PC-3 (cell line): ENCODE measurements at regions of chr18 and their contacts with region 1.

Region 1: GRCh38 chr18:2655178-2655953 is at the start of gene SMCHD1:
- DNase-seq: peak; percentile 78
- ATAC-seq: peak; percentile 64
- H3K4me3 ChIP-seq: peak within 1 kb of the TSS; percentile 87
- H3K27ac ChIP-seq: peak within 1 kb of the TSS; percentile 64
- H3K4me1 ChIP-seq: peaks cover 43% of the 10 kb centered on the region
- H3K27me3 ChIP-seq: no peaks in the 10 kb centered on the region
- CTCF ChIP-seq: no peak
- total RNA-seq, gene SMCHD1: 42.0 and 61.0 TPM in 2 replicates

Region 2: GRCh38 chr18:2571200-2572143 is 83.9 kb before region 1 on chr18 and contains the starts of genes METTL4 and NDC80:
- CTCF ChIA-PET with region 1: interaction called, 4 read pairs
- POLR2A ChIA-PET with region 1: interaction called, 7 read pairs
- intact Hi-C with region 1: loop called (anchors 1 kb)
- DNase-seq: peak; percentile 94
- ATAC-seq: peak; percentile 76
- H3K4me3 ChIP-seq: peak within 1 kb of the TSS; percentile 97
- H3K27ac ChIP-seq: peak within 1 kb of the TSS; percentile 90
- H3K4me1 ChIP-seq: peaks cover 15% of the 10 kb centered on the region
- H3K27me3 ChIP-seq: no peaks in the 10 kb centered on the region
- CTCF ChIP-seq: no peak
- total RNA-seq, gene METTL4: 7.5 and 8.6 TPM in 2 replicates
- total RNA-seq, gene NDC80: 26.0 and 53.4 TPM in 2 replicates

Region 3: GRCh38 chr18:2589345-2590068 is 65.9 kb before region 1 on chr18:
- CTCF ChIA-PET with region 1: no interaction called
- POLR2A ChIA-PET with region 1: no interaction called
- intact Hi-C with region 1: loop called (anchors 5 kb)
- DNase-seq: peak; percentile 17
- ATAC-seq: peak; percentile 43
- H3K4me3 ChIP-seq: no peak overlapping the region
- H3K27ac ChIP-seq: no peak overlapping the region
- H3K4me1 ChIP-seq: peaks cover 16% of the 10 kb centered on the region
- H3K27me3 ChIP-seq: no peaks in the 10 kb centered on the region
- CTCF ChIP-seq: no peak

Region 4: GRCh38 chr18:2606335-2606734 is 49.0 kb before region 1 on chr18:
- CTCF ChIA-PET with region 1: no interaction called
- POLR2A ChIA-PET with region 1: interaction called, 7 read pairs
- intact Hi-C with region 1: loop called (anchors 1 kb)
- DNase-seq: no peak
- ATAC-seq: no peak
- H3K4me3 ChIP-seq: no peak overlapping the region
- H3K27ac ChIP-seq: no peak overlapping the region
- H3K4me1 ChIP-seq: peaks cover 15% of the 10 kb centered on the region
- H3K27me3 ChIP-seq: no peaks in the 10 kb centered on the region
- CTCF ChIP-seq: no peak

Region 5: GRCh38 chr18:2618009-2618408 is 37.4 kb before region 1 on chr18:
- CTCF ChIA-PET with region 1: no interaction called
- POLR2A ChIA-PET with region 1: no interaction called
- intact Hi-C with region 1: no loop called
- DNase-seq: no peak
- ATAC-seq: no peak
- H3K4me3 ChIP-seq: no peak overlapping the region
- H3K27ac ChIP-seq: no peak overlapping the region
- H3K4me1 ChIP-seq: no peaks in the 10 kb centered on the region
- H3K27me3 ChIP-seq: no peaks in the 10 kb centered on the region
- CTCF ChIP-seq: no peak

Region 6: GRCh38 chr18:2681993-2682603 is 26.7 kb after region 1 on chr18:
- CTCF ChIA-PET with region 1: no interaction called
- POLR2A ChIA-PET with region 1: interaction called, 5 read pairs
- intact Hi-C with region 1: loop called (anchors 2 kb)
- DNase-seq: no peak
- ATAC-seq: no peak
- H3K4me3 ChIP-seq: no peak overlapping the region
- H3K27ac ChIP-seq: no peak overlapping the region
- H3K4me1 ChIP-seq: no peaks in the 10 kb centered on the region
- H3K27me3 ChIP-seq: no peaks in the 10 kb centered on the region
- CTCF ChIP-seq: no peak

Region 7: DNA sequence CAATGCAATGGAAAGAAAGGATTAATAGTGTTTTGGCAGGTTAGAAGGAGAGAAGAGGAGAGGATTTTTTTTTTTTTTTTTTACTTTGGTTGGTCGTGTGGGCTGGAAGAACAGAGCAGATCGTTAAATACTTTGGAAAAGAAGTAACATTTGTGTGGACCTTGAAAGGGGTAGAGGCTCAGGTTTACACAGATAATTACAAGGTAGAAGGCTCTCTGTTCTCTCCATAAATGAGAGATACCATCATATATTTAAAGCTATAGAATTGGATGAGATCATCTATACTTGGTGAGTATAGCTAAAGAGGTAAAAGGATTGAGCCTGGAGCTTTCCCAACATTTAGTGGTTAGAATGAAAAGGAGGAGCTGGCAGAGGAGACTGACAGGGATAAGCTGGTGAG is 49.2 kb after region 1 on chr18:
- CTCF ChIA-PET with region 1: no interaction called
- POLR2A ChIA-PET with region 1: no interaction called
- intact Hi-C with region 1: no loop called
- DNase-seq: no peak
- ATAC-seq: no peak
- H3K4me3 ChIP-seq: no peak overlapping the region
- H3K27ac ChIP-seq: no peak overlapping the region
- H3K4me1 ChIP-seq: no peaks in the 10 kb centered on the region
- H3K27me3 ChIP-seq: no peaks in the 10 kb centered on the region
- CTCF ChIP-seq: no peak

Region 8: GRCh38 chr18:3012964-3013804 is 357.8 kb after region 1 on chr18 and contains the start of gene LPIN2:
- CTCF ChIA-PET with region 1: no interaction called
- POLR2A ChIA-PET with region 1: interaction called, 4 read pairs
- intact Hi-C with region 1: loop called (anchors 10 kb)
- DNase-seq: peak; percentile 99
- ATAC-seq: peak; percentile 70
- H3K4me3 ChIP-seq: peak within 1 kb of the TSS; percentile 84
- H3K27ac ChIP-seq: no peak within 1 kb of the TSS
- H3K4me1 ChIP-seq: peaks cover 39% of the 10 kb centered on the region
- H3K27me3 ChIP-seq: no peaks in the 10 kb centered on the region
- CTCF ChIP-seq: no peak
- total RNA-seq, gene LPIN2: 9.8 and 10.7 TPM in 2 replicates

Region 9: DNA sequence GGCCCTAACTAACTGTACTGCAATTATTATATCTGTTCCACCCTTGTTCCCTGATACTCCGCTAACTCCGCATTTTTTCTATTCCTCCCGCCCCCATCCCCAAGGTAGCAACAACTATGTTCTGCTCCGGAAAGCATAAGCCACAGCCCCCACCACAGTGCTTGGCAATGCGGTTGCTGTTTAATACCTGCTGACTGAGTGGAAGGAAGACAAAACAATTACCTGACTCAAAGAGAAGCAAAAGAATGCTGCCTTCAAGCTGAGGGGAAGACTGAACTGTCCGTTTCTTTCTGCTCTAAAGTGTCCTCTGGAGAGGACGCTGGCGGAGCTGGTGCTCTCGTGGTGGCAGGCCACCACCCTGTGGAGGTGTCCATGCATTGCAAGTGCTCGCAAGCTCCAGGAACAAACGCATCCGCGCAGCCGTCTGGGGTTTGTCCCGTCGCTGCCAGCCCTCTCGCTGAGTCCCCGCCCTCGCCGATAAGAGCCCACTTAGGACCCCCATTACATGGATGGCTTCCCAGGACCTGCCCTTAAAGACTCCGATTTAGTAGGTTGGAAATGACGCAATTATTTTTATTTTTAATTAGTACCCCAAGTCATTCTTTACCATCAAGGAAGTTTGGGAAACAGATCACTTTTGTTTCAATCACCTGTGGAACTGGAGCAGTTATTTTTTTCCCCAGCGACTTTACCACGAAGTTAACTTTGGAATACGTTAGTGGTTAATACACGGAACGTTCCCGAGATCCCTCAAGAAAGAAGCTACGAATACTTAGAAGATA is 590.7 kb after region 1 on chr18:
- CTCF ChIA-PET with region 1: no interaction called
- POLR2A ChIA-PET with region 1: interaction called, 3 read pairs
- intact Hi-C with region 1: loop called (anchors 2 kb)
- DNase-seq: peak; percentile 94
- ATAC-seq: peak; percentile 58
- H3K4me3 ChIP-seq: peak overlapping the region; percentile 92
- H3K27ac ChIP-seq: peak overlapping the region; percentile 79
- H3K4me1 ChIP-seq: peaks cover 27% of the 10 kb centered on the region
- H3K27me3 ChIP-seq: no peaks in the 10 kb centered on the region
- CTCF ChIP-seq: peak; percentile 97